ENCODE measurements at regions of chr6 and their contacts with region 1.

Region 1: DNA sequence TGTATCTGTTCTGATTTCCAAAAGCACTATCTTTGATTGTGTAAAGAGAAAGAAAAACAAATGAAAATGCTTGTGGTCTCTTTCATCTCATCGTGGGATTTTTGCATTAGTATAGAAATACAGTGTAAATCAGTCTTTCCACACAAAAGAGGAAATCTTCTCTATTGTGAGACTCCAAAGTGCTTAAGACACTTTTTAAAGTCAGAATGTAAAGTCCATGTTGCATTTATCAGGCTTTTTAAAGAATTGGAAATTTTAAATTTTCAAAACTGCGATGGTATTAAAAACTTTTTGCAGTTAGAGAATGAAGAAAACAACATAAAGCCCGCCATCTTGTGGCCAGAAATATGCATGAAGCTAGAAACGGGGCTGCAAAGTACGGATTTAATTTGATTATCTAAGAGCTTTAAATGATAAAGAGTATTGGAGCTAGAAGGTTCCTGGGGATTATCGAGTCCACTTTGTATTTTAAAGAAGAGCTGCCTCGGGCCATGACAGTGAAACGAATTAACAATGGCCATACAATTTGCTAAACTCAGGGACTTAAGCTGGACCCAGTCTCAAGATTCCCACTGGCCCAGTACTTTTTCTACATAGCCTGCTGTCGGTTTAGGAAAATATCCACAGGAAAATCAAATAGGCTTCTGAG is 339.6 kb downstream of the ARHGAP18 start:
- DNase-seq: peak; percentile 18
- H3K4me3 ChIP-seq: no peak overlapping the region; the same call in 1 of the 2 replicates
- H3K27ac ChIP-seq: no peak overlapping the region
- H3K27me3 ChIP-seq: no peaks in the 10 kb centered on the region
- CTCF ChIP-seq: peak; percentile 73

Region 2: GRCh38 chr6:128525406-128525805 is 845.0 kb before region 1 on chr6:
- CTCF ChIA-PET with region 1: no interaction called
- POLR2A ChIA-PET with region 1: no interaction called
- DNase-seq: no peak
- H3K4me3 ChIP-seq: no peak overlapping the region
- H3K27ac ChIP-seq: no peak overlapping the region
- H3K27me3 ChIP-seq: no peaks in the 10 kb centered on the region
- CTCF ChIP-seq: no peak

Region 3: GRCh38 chr6:128807577-128807976 is 562.8 kb before region 1 on chr6:
- CTCF ChIA-PET with region 1: interaction called, 12 read pairs
- POLR2A ChIA-PET with region 1: interaction called, 4 read pairs
- DNase-seq: peak; percentile 11
- H3K4me3 ChIP-seq: no peak overlapping the region
- H3K27ac ChIP-seq: no peak overlapping the region
- H3K27me3 ChIP-seq: no peaks in the 10 kb centered on the region
- CTCF ChIP-seq: peak; percentile 69

Region 4: GRCh38 chr6:129264480-129265045 is 105.8 kb before region 1 on chr6:
- CTCF ChIA-PET with region 1: interaction called, 10 read pairs
- POLR2A ChIA-PET with region 1: no interaction called
- DNase-seq: no peak
- H3K4me3 ChIP-seq: no peak overlapping the region
- H3K27ac ChIP-seq: no peak overlapping the region
- H3K27me3 ChIP-seq: no peaks in the 10 kb centered on the region
- CTCF ChIP-seq: no peak

Region 5: GRCh38 chr6:129351807-129352206 is 18.6 kb before region 1 on chr6:
- CTCF ChIA-PET with region 1: interaction called, 11 read pairs
- POLR2A ChIA-PET with region 1: no interaction called
- DNase-seq: no peak
- H3K4me3 ChIP-seq: no peak overlapping the region
- H3K27ac ChIP-seq: no peak overlapping the region
- H3K27me3 ChIP-seq: no peaks in the 10 kb centered on the region
- CTCF ChIP-seq: no peak

Region 6: GRCh38 chr6:129381885-129382284 is 11.5 kb after region 1 on chr6:
- CTCF ChIA-PET with region 1: interaction called, 16 read pairs
- POLR2A ChIA-PET with region 1: no interaction called
- DNase-seq: no peak
- H3K4me3 ChIP-seq: no peak overlapping the region
- H3K27ac ChIP-seq: no peak overlapping the region
- H3K27me3 ChIP-seq: peaks cover 7% of the 10 kb centered on the region
- CTCF ChIP-seq: no peak

Measured in AG04450 (cell line).